ACHN (cell line): ENCODE measurements at regions of chr1 and their contacts with region 1.

Region 1: DNA sequence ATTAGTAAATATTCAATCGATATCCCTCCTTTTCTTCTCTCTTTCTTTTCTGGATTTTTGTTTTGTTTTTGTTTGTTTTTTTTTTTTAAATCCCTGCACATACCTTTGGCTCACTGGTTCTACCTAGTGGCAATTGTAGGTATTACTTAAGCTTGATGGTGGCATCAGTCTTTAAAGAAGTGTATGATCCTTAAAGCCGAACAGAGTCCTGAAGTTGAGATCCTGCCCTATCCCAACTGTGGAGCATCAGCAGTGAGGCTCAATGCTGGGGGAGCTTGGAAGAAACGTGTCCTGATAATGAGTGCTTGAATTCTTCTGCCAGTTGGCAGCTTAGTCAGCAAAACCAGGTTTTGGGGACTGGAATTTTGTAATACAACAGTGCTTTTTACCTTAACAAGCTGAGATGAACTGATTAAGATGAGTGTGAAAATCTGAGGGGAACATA is 60.8 kb downstream of the FASLG start:
- DNase-seq: peak; percentile 62

Region 2: DNA sequence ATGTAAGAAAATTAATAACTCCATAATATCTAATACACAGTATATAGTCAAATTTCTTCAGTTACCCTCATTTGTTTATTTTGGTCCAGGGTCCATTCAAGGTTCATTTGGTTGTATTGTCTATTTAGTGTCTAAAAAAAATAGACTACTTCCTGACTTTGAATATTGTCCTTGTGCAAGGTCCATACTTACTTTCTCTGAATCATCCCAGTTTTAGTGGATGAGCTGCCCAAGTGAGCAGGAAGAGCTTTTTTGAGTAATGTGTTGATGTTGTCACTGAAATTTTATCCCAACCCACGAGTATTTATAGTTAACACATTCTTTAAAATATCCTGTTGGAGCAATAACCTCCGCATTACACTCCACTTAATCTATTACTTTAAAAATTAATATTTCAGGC is 106.4 kb before region 1 on chr1:
- in situ Hi-C with region 1: loop called (anchors 10 kb)
- DNase-seq: no peak

Region 3: GRCh38 chr1:172789866-172790644 is 70.3 kb after region 1 on chr1:
- in situ Hi-C with region 1: no loop called
- DNase-seq: no peak

Region 4: GRCh38 chr1:172826096-172826743 is 106.5 kb after region 1 on chr1:
- in situ Hi-C with region 1: no loop called
- DNase-seq: peak; percentile 78